ENCODE measurements at regions of chr12 and their contacts with region 1.

Region 1: DNA sequence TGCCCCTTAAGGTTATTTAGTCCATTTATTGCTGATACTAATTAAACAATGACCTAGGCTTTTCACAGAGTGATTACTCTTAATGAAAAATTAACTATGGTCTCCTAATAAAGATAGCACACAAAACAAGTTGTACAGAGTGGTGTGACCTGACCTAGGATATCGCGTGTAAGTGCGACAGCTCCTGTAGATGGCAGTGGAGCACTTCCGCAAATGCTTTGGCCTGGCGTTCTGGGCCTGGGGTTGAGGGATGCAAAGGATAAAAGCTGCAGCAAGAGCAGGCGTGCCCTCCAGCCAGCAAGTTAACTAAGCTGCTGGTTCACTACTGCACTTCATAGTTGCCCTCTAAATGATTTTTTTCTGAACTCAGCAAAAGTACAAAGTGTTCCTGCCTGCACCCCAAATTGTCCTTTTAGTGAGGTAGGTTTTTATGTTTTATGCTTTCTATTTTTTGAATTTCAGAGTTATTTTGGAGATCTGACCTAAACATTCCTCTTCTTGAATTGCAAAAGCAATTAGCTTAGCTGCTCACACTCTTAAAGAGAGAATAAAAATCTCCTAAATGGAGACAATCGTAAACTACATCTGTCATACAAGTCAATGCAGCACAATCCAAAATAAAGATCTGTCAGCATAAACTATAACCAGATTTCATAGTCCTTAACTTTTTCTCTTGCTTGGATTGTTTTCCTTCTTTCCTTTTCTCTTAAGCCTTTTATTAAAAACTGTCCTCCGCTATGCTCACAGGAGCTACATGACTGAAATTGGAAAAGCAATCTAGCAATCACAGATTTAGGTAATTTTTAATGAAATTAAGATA is 379.6 kb downstream of the LRIG3 start:
- DNase-seq: peak; percentile 89
- H3K4me3 ChIP-seq: no peak overlapping the region
- H3K27ac ChIP-seq: no peak overlapping the region
- H3K4me1 ChIP-seq: peaks cover 10% of the 10 kb centered on the region
- H3K27me3 ChIP-seq: no peaks in the 10 kb centered on the region
- CTCF ChIP-seq: peak; percentile 76 to 79
- POLR2A ChIP-seq: no peak

Region 2: DNA sequence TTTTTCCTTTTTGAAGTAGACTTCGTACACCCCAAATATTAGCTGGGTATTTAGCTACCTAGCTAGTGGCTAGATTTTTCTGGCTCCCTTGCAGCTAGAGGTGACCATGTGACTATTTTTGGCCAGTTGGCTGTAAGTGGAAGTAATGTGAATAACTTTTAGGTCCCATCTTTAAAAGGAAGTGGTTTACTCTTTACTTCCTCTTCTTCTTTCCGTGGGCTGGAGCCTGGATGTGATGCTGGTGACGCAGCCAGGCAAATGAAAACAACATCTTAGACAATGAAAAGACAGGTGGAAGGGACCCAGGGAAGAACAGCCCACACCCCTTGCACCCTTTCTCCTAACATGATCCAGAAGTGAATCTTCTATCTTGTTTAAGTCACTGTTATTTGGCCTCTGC is 353.8 kb before region 1 on chr12:
- CTCF ChIA-PET with region 1: no interaction called
- POLR2A ChIA-PET with region 1: no interaction called
- dilution Hi-C with region 1: no loop called
- intact Hi-C with region 1: no loop called
- DNase-seq: no peak
- H3K4me3 ChIP-seq: no peak overlapping the region
- H3K27ac ChIP-seq: no peak overlapping the region
- H3K4me1 ChIP-seq: no peaks in the 10 kb centered on the region
- H3K27me3 ChIP-seq: no peaks in the 10 kb centered on the region
- CTCF ChIP-seq: no peak
- POLR2A ChIP-seq: no peak

Region 3: GRCh38 chr12:58425481-58426392 is 115.0 kb before region 1 on chr12:
- CTCF ChIA-PET with region 1: interaction called, 11 read pairs
- POLR2A ChIA-PET with region 1: no interaction called
- dilution Hi-C with region 1: no loop called
- intact Hi-C with region 1: no loop called
- DNase-seq: peak; percentile 95
- H3K4me3 ChIP-seq: peak overlapping the region in 1 of 3 experiments; percentile 1
- H3K27ac ChIP-seq: peak overlapping the region; percentile 85
- H3K4me1 ChIP-seq: peaks cover 25% of the 10 kb centered on the region
- H3K27me3 ChIP-seq: no peaks in the 10 kb centered on the region
- CTCF ChIP-seq: no peak
- POLR2A ChIP-seq: no peak

Region 4: DNA sequence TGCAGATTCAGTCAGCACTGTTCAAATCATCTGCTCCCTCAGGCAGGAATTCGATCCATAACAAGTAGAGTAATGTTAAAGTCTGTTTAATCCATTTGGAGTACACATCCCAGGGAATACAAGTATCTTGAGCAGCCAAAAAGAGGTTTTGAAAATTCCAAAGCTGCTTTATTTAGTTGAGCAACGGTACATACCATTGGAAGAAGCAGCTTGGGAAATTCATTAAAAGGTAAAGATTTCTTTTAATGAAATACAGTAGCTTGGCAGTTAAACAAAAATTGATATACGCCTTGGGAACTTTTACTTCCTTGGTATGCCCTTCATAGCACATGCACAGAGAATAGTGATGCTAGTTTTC is 225.8 kb after region 1 on chr12:
- CTCF ChIA-PET with region 1: interaction called, 11 read pairs
- POLR2A ChIA-PET with region 1: no interaction called
- dilution Hi-C with region 1: no loop called
- intact Hi-C with region 1: no loop called
- DNase-seq: no peak
- H3K4me3 ChIP-seq: no peak overlapping the region
- H3K27ac ChIP-seq: no peak overlapping the region
- H3K4me1 ChIP-seq: no peaks in the 10 kb centered on the region
- H3K27me3 ChIP-seq: no peaks in the 10 kb centered on the region
- CTCF ChIP-seq: no peak
- POLR2A ChIP-seq: no peak

Region 5: GRCh38 chr12:58871556-58871955 is 330.9 kb after region 1 on chr12:
- CTCF ChIA-PET with region 1: interaction called, 34 read pairs
- POLR2A ChIA-PET with region 1: no interaction called
- dilution Hi-C with region 1: no loop called
- intact Hi-C with region 1: loop called (anchors 10 kb)
- DNase-seq: no peak
- H3K4me3 ChIP-seq: no peak overlapping the region
- H3K27ac ChIP-seq: no peak overlapping the region
- H3K4me1 ChIP-seq: no peaks in the 10 kb centered on the region
- H3K27me3 ChIP-seq: no peaks in the 10 kb centered on the region
- CTCF ChIP-seq: no peak
- POLR2A ChIP-seq: no peak

Region 6: GRCh38 chr12:59077575-59078426 is 537.1 kb after region 1 on chr12:
- CTCF ChIA-PET with region 1: interaction called, 164 read pairs
- POLR2A ChIA-PET with region 1: no interaction called
- dilution Hi-C with region 1: no loop called
- intact Hi-C with region 1: no loop called
- DNase-seq: peak; percentile 93
- H3K4me3 ChIP-seq: no peak overlapping the region
- H3K27ac ChIP-seq: peak overlapping the region; percentile 9
- H3K4me1 ChIP-seq: peaks cover 52% of the 10 kb centered on the region
- H3K27me3 ChIP-seq: no peaks in the 10 kb centered on the region
- CTCF ChIP-seq: no peak
- POLR2A ChIP-seq: no peak

Region 7: GRCh38 chr12:59149997-59150642 is 609.4 kb after region 1 on chr12:
- CTCF ChIA-PET with region 1: interaction called, 99 read pairs
- POLR2A ChIA-PET with region 1: no interaction called
- dilution Hi-C with region 1: no loop called
- intact Hi-C with region 1: loop called (anchors 1 kb)
- DNase-seq: peak; percentile 89
- H3K4me3 ChIP-seq: no peak overlapping the region
- H3K27ac ChIP-seq: no peak overlapping the region
- H3K4me1 ChIP-seq: no peaks in the 10 kb centered on the region
- H3K27me3 ChIP-seq: peaks cover 0 to 2% of the 10 kb centered on the region in 2 experiments
- CTCF ChIP-seq: peak; percentile 79 to 83
- POLR2A ChIP-seq: no peak